ENCODE measurements at regions of chr4 and their contacts with region 1.

Region 1: GRCh38 chr4:137572647-137573046 is 40.4 kb upstream of the PCDH18 start:
- DNase-seq: no peak
- ATAC-seq: peak; percentile 60
- H3K4me3 ChIP-seq: no peak overlapping the region
- H3K27ac ChIP-seq: no peak overlapping the region
- H3K4me1 ChIP-seq: no peaks in the 10 kb centered on the region
- H3K27me3 ChIP-seq: no peaks in the 10 kb centered on the region
- CTCF ChIP-seq: no peak
- EP300 ChIP-seq: no peak
- POLR2A ChIP-seq: no peak
- RAD21 ChIP-seq: no peak

Region 2: GRCh38 chr4:137156054-137156453 is 416.6 kb before region 1 on chr4:
- CTCF ChIA-PET with region 1: no interaction called
- POLR2A ChIA-PET with region 1: no interaction called
- RAD21 ChIA-PET with region 1: no interaction called
- SMC1A ChIA-PET with region 1: no interaction called
- in situ Hi-C with region 1: no loop called
- intact Hi-C with region 1: no loop called
- DNase-seq: no peak
- ATAC-seq: no peak
- H3K4me3 ChIP-seq: no peak overlapping the region
- H3K27ac ChIP-seq: no peak overlapping the region
- H3K4me1 ChIP-seq: no peaks in the 10 kb centered on the region
- H3K27me3 ChIP-seq: no peaks in the 10 kb centered on the region
- CTCF ChIP-seq: no peak
- EP300 ChIP-seq: no peak
- POLR2A ChIP-seq: no peak
- RAD21 ChIP-seq: no peak

Region 3: DNA sequence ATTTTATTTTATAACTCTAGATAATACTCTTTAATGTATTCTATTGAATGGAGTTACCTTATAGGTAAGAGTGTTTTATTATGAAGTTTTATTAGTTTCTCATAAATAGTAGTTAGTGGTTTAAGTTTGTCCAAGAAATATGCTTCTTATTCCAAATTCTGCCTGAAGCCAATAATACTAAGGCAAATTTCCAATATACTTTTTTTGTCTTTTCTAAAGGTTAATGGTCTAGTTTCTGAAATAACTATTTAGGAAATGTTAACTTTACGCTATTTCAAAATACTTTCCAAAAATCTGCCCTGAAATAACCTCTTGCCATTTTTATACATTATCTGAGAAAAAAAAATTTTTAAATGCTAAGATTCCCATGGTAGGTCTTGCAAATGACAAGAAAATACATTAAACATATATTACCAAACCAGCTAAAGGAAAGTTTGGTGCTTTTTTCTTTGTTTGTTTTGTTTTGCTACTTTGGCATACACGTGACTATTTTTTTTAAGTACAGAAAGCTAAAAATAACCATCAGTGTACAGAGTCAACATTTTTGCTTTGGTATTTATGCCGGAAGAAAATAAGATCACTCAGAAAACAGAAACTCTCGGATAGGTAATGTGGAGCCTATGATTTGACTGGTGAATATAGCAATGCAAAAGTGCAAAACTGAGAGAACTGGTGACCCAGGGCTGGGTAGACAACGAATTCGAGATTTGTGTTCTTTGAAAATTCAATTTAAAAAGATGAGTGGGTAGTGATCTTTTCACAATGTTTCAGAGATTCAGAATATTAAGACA is 70.1 kb before region 1 on chr4:
- CTCF ChIA-PET with region 1: no interaction called
- POLR2A ChIA-PET with region 1: no interaction called
- RAD21 ChIA-PET with region 1: no interaction called
- SMC1A ChIA-PET with region 1: no interaction called
- in situ Hi-C with region 1: no loop called
- intact Hi-C with region 1: no loop called
- DNase-seq: no peak
- ATAC-seq: peak; percentile 21; the same call in 1 of the 3 replicates
- H3K4me3 ChIP-seq: no peak overlapping the region
- H3K27ac ChIP-seq: no peak overlapping the region
- H3K4me1 ChIP-seq: no peaks in the 10 kb centered on the region
- H3K27me3 ChIP-seq: no peaks in the 10 kb centered on the region
- CTCF ChIP-seq: no peak
- EP300 ChIP-seq: no peak
- POLR2A ChIP-seq: no peak
- RAD21 ChIP-seq: no peak

Region 4: DNA sequence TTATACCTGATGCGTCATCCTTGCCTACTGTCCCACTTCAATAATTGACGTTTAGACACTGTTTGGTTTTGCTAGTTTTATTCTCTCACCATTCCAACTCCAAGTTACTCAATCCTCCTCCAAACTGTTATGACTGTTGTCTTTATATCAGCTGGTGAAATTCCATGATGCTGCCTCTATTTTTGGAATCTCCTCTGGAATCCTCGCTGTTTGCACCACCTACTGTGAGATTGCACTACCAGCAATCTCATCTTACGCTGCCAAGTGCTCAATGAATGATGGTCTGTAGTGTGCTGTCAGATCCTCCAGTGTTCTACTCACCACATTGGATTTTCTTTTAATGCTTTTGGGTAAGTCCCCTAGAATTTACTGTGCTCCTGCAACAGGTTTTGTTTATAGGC is 27.2 kb before region 1 on chr4:
- CTCF ChIA-PET with region 1: no interaction called
- POLR2A ChIA-PET with region 1: no interaction called
- RAD21 ChIA-PET with region 1: no interaction called
- SMC1A ChIA-PET with region 1: no interaction called
- in situ Hi-C with region 1: no loop called
- intact Hi-C with region 1: no loop called
- DNase-seq: no peak
- ATAC-seq: no peak
- H3K4me3 ChIP-seq: no peak overlapping the region
- H3K27ac ChIP-seq: no peak overlapping the region
- H3K4me1 ChIP-seq: no peaks in the 10 kb centered on the region
- H3K27me3 ChIP-seq: no peaks in the 10 kb centered on the region
- CTCF ChIP-seq: no peak
- EP300 ChIP-seq: no peak
- POLR2A ChIP-seq: no peak
- RAD21 ChIP-seq: no peak

Region 5: GRCh38 chr4:137647375-137647774 is 74.7 kb after region 1 on chr4:
- CTCF ChIA-PET with region 1: no interaction called
- POLR2A ChIA-PET with region 1: no interaction called
- RAD21 ChIA-PET with region 1: no interaction called
- SMC1A ChIA-PET with region 1: no interaction called
- in situ Hi-C with region 1: no loop called
- intact Hi-C with region 1: loop called (anchors 2 kb)
- DNase-seq: peak; percentile 45
- ATAC-seq: peak; percentile 95
- H3K4me3 ChIP-seq: no peak overlapping the region
- H3K27ac ChIP-seq: no peak overlapping the region
- H3K4me1 ChIP-seq: no peaks in the 10 kb centered on the region
- H3K27me3 ChIP-seq: no peaks in the 10 kb centered on the region
- CTCF ChIP-seq: no peak
- EP300 ChIP-seq: peak; percentile 63 to 74; a peak in 2 of 4 replicates
- POLR2A ChIP-seq: no peak
- RAD21 ChIP-seq: no peak

Measured in GM12878 (cell line).